HepG2 (cell line): ENCODE measurements at regions of chr9 and their contacts with region 1.

Region 1: DNA sequence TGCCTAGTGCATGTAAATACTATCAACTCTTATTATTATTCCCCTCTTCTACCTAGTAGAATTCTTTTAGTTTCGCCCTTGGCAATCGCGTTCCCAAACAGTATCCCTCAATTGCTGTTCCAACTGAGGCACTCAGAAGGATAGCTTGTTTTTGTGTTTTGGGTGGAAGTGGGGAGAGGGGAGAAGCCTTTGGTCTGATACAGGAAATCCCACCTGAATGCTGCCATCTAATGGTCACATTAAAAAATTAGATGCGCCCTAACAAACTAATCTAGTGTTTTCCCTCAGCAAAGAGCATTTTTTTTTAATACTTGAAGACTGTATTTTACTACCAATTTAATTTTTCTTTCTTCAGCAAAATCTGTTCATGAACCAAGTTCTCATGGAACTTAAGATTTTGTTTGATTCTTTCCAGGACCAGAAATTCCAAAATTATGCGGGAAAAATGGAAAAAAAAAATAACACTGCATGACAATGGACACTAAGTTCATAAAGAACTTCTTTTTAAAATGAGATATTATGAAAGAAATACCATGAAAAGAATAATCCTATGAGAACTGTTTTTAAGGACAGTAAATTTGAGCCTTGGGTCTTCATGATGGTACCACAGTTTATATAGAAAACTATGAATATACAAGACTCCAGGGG is 22.2 kb upstream of the GLDC start:
- DNase-seq: no peak
- ATAC-seq: no peak
- H3K4me3 ChIP-seq: no peak overlapping the region
- H3K27ac ChIP-seq: no peak overlapping the region
- H3K4me1 ChIP-seq: peaks cover 70% of the 10 kb centered on the region
- H3K27me3 ChIP-seq: no peaks in the 10 kb centered on the region
- CTCF ChIP-seq: peak; percentile 69
- EP300 ChIP-seq: no peak
- POLR2A ChIP-seq: no peak
- RAD21 ChIP-seq: peak; percentile 47; the same call in 1 of the 2 replicates

Region 2: DNA sequence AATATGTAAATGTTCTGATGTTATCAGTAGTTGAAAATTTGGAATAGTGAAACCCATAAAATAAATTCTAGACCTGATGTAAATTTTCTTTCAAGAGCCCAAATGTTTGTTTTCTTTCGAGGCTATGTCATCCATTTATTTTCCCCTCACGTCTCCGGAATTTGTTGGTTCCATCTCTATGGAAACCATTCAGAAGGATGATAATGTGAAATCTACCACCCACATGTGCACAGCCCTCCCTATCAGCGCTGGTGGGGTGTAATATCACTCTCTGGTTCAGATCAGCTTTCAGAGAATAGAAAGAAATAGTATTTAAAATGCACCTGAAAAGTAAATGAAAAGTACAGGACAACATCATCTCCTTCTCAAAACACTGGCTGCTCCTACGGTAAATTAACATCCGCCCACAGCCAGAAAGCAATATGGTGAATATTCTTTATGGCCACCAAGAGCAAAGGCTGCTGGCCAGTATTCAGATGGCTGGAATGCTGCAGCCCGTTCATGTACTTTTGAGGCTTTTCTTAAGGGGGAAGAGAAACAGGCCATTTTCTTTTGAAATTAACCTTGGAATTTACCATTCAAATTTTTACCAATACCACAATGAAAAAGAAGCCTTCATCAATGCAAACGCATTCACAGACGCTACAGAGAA is 50.7 kb before region 1 on chr9:
- CTCF ChIA-PET with region 1: no interaction called
- POLR2A ChIA-PET with region 1: no interaction called
- in situ Hi-C with region 1: no loop called
- intact Hi-C with region 1: no loop called
- DNase-seq: no peak
- ATAC-seq: no peak
- H3K4me3 ChIP-seq: no peak overlapping the region
- H3K27ac ChIP-seq: no peak overlapping the region
- H3K4me1 ChIP-seq: no peaks in the 10 kb centered on the region
- H3K27me3 ChIP-seq: no peaks in the 10 kb centered on the region
- CTCF ChIP-seq: no peak
- EP300 ChIP-seq: no peak
- POLR2A ChIP-seq: no peak
- RAD21 ChIP-seq: no peak

Region 3: DNA sequence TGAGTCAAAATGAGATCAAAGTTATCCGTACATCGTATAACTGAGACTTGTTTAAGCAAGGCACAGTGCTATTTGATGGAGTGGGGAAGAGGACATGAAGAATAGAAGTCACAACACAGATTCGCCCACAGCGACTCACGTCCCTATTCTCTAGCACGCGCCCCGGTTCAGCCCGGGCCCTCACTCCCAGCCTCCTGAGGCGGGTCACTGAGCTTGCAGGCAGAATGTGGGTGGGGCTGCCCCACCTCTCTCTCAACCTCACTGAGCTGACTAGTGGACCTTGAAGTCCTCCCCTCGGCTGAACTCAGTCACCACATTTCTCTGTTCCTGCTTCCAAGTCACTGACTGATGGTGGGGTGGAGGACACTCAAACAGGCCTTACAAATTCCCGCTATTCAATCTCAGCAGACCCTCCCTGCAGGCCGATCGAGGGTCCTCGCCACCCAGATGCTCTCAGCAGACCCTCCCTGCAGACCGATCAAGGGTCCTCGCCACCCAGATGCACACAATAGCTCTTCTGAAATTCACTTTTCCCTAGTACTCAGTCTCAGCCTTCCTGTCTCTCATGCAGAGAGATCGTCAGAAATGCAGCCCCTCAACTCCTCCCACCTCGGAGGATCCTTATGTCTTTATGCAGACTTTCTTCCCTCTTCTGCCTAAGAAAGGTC is 35.1 kb before region 1 on chr9:
- CTCF ChIA-PET with region 1: no interaction called
- POLR2A ChIA-PET with region 1: interaction called, 3 read pairs
- in situ Hi-C with region 1: no loop called
- intact Hi-C with region 1: loop called (anchors 5 kb)
- DNase-seq: peak; percentile 74
- ATAC-seq: peak; percentile 97
- H3K4me3 ChIP-seq: peak overlapping the region in 1 of 3 experiments; percentile 35; a peak in 3 of 6 replicates
- H3K27ac ChIP-seq: peak overlapping the region; percentile 49
- H3K4me1 ChIP-seq: peaks cover 67% of the 10 kb centered on the region
- H3K27me3 ChIP-seq: no peaks in the 10 kb centered on the region
- CTCF ChIP-seq: 0 out of 2 replicates have a peak, but pooled peaks have one; percentile 7
- EP300 ChIP-seq: peak in 1 of 2 experiments; percentile 14; a peak in 1 of 4 replicates
- POLR2A ChIP-seq: peak in 1 of 2 experiments; percentile 31; a peak in 1 of 4 replicates
- RAD21 ChIP-seq: 0 out of 2 replicates have a peak, but pooled peaks have one; percentile 14

Region 4: DNA sequence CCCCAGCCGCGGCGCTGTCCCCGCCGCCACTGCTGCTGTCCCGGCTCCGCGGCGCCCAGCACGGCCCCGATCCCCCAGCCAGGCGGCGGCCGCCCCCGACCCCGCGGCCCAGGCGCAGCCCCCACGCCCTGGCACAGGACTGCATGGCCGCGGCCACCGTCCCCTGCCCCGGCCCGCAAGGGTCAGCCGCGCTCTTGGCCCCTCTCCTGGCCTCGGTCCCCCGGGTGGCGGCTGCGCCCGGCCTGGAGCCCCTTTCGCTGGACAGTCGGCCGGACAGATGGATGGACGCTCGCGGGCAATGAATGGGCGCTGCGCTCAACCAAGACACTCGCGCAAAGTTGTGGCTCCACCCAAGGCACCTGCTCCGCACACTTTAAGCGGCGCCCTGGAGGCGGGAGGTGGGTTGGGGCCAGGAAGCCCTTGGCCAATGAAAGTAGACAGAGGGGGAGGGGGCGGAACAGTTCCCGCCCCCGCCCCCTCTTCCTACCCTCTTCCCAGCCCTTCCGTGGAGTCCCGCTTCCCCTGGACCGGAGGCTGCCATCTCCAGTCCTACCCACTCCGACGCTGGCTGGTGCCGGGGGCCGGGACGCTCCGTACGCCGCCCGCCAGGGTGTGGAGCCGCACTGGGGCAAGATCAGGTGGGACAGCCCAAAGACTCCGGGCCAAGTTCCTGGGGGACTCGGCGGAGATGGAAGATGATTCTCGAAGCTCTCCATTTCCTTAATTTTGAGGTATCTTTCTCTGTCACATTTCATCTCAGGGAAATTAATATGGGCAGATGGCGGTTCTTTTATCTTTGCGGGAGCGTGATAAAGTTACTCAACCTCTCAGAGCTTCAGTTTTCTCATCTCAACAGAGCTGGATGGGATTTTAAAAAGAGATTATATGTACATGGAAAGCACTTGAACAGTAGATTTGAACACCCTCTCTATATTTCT is 22.1 kb before region 1 on chr9 and contains the start of gene GLDC:
- CTCF ChIA-PET with region 1: no interaction called
- POLR2A ChIA-PET with region 1: interaction called, 16 read pairs
- in situ Hi-C with region 1: no loop called
- intact Hi-C with region 1: loop called (anchors 1 kb)
- DNase-seq: peak; percentile 90
- ATAC-seq: peak; percentile 95
- H3K4me3 ChIP-seq: peak within 1 kb of the TSS; percentile 76 to 96 (median 81)
- H3K27ac ChIP-seq: peak within 1 kb of the TSS; percentile 72
- H3K4me1 ChIP-seq: peaks cover 61% of the 10 kb centered on the region
- H3K27me3 ChIP-seq: no peaks in the 10 kb centered on the region; a peak in 1 of 5 replicates
- CTCF ChIP-seq: peak; percentile 33
- EP300 ChIP-seq: no peak
- POLR2A ChIP-seq: peak; percentile 80 to 87
- RAD21 ChIP-seq: no peak
- total RNA-seq, gene GLDC: 51.0 and 115 TPM in 2 replicates

Region 5: GRCh38 chr9:6656614-6657300 is 11.0 kb before region 1 on chr9:
- CTCF ChIA-PET with region 1: no interaction called
- POLR2A ChIA-PET with region 1: no interaction called
- in situ Hi-C with region 1: no loop called
- intact Hi-C with region 1: no loop called
- DNase-seq: no peak
- ATAC-seq: no peak
- H3K4me3 ChIP-seq: no peak overlapping the region
- H3K27ac ChIP-seq: no peak overlapping the region
- H3K4me1 ChIP-seq: peaks cover 11% of the 10 kb centered on the region
- H3K27me3 ChIP-seq: no peaks in the 10 kb centered on the region
- CTCF ChIP-seq: no peak
- EP300 ChIP-seq: no peak
- POLR2A ChIP-seq: no peak
- RAD21 ChIP-seq: no peak

Region 6: GRCh38 chr9:6805532-6805931 is 137.8 kb after region 1 on chr9:
- CTCF ChIA-PET with region 1: no interaction called
- POLR2A ChIA-PET with region 1: no interaction called
- in situ Hi-C with region 1: no loop called
- intact Hi-C with region 1: no loop called
- DNase-seq: no peak
- ATAC-seq: no peak
- H3K4me3 ChIP-seq: no peak overlapping the region
- H3K27ac ChIP-seq: no peak overlapping the region
- H3K4me1 ChIP-seq: no peaks in the 10 kb centered on the region
- H3K27me3 ChIP-seq: no peaks in the 10 kb centered on the region
- CTCF ChIP-seq: no peak
- EP300 ChIP-seq: no peak
- POLR2A ChIP-seq: no peak
- RAD21 ChIP-seq: no peak